ENCODE measurements at regions of chr7 and their contacts with region 1.

Region 1: DNA sequence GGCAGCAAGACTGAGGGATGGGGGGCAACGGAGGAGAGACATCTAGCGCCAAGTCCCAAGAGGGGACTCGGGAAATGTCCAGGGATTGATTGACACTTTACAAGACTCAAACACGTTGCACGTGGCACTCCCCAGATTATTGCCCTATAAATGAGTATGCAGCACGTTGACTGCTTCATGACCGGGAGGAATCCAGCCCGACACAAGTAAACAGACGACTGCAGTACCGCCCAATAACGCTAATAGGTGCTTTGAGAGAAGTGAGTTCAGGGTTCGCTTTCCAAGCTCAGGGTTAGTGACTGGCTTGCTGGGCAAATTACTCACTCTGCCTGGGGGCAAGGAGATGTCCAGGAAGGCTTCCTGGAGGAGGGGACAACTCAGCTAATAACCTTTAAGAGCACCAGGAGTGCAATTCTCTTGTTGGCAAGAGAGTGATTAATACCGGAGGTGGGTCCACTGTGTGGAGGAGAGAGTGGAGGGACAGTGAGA is 73.3 kb upstream of the MYL10 start:
- DNase-seq: peak; percentile 56
- ATAC-seq: peak; percentile 80
- H3K4me3 ChIP-seq: no peak overlapping the region
- H3K27ac ChIP-seq: no peak overlapping the region
- H3K4me1 ChIP-seq: peaks cover 51% of the 10 kb centered on the region
- H3K27me3 ChIP-seq: peaks cover 5 to 21% of the 10 kb centered on the region in 2 experiments; a peak in 4 of 5 replicates
- CTCF ChIP-seq: peak; percentile 36
- EP300 ChIP-seq: no peak
- POLR2A ChIP-seq: no peak
- RAD21 ChIP-seq: no peak; the same call in 1 of the 2 replicates

Region 2: DNA sequence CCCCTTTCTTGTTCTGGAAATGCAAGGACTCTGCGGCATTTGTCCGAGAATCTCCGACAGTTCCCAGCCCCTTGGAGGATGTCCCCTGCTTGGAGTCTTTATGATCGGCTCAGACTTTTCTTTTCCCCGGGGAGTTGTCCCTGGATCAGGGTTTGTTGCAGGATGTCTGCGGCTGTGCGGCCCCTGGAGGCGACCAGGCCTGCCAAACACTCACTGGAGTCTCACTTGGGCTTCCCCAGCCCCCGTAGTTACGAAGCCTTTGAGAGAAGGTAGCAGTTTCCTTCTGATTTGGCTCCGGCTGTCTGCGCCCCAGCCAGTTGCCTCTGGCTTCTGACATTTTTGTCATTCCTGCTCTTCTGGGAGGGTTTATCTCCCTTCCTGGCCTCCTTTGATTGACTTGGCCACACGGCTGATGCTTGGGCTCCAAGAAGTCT is 323.6 kb before region 1 on chr7:
- CTCF ChIA-PET with region 1: no interaction called
- POLR2A ChIA-PET with region 1: no interaction called
- in situ Hi-C with region 1: no loop called
- intact Hi-C with region 1: no loop called
- DNase-seq: no peak
- ATAC-seq: no peak
- H3K4me3 ChIP-seq: no peak overlapping the region
- H3K27ac ChIP-seq: no peak overlapping the region
- H3K4me1 ChIP-seq: peaks cover 6% of the 10 kb centered on the region
- H3K27me3 ChIP-seq: no peaks in the 10 kb centered on the region; a peak in 1 of 5 replicates
- CTCF ChIP-seq: no peak
- EP300 ChIP-seq: no peak
- POLR2A ChIP-seq: no peak
- RAD21 ChIP-seq: no peak

Region 3: GRCh38 chr7:101733713-101734475 is 31.5 kb after region 1 on chr7:
- CTCF ChIA-PET with region 1: no interaction called
- POLR2A ChIA-PET with region 1: no interaction called
- in situ Hi-C with region 1: no loop called
- intact Hi-C with region 1: loop called (anchors 1 kb)
- DNase-seq: peak; percentile 57
- ATAC-seq: peak; percentile 78
- H3K4me3 ChIP-seq: peak overlapping the region; percentile 2 to 61 (median 47); a peak in 4 of 6 replicates
- H3K27ac ChIP-seq: no peak overlapping the region
- H3K4me1 ChIP-seq: peaks cover 24% of the 10 kb centered on the region
- H3K27me3 ChIP-seq: peaks cover 0 to 7% of the 10 kb centered on the region in 2 experiments; a peak in 3 of 5 replicates
- CTCF ChIP-seq: no peak
- EP300 ChIP-seq: no peak
- POLR2A ChIP-seq: no peak
- RAD21 ChIP-seq: no peak

Measured in HepG2 (cell line).